Ovary (tissue), 10 donors: ENCODE measurements at regions of chr1 and their contacts with region 1.

Region 1: GRCh38 chr1:32612189-32612881 is 38.0 kb downstream of the ZBTB8OS start:
- DNase-seq: peak; percentile 45 to 79 (median 65)
- H3K4me3 ChIP-seq: peak overlapping the region; percentile 27
- H3K27ac ChIP-seq: no peak overlapping the region
- H3K4me1 ChIP-seq: peaks cover 5% of the 10 kb centered on the region
- H3K27me3 ChIP-seq: no peaks in the 10 kb centered on the region
- CTCF ChIP-seq: peak in 1 of 3 donors; percentile 36
- EP300 ChIP-seq: no peak
- POLR2A ChIP-seq: no peak

Region 2: DNA sequence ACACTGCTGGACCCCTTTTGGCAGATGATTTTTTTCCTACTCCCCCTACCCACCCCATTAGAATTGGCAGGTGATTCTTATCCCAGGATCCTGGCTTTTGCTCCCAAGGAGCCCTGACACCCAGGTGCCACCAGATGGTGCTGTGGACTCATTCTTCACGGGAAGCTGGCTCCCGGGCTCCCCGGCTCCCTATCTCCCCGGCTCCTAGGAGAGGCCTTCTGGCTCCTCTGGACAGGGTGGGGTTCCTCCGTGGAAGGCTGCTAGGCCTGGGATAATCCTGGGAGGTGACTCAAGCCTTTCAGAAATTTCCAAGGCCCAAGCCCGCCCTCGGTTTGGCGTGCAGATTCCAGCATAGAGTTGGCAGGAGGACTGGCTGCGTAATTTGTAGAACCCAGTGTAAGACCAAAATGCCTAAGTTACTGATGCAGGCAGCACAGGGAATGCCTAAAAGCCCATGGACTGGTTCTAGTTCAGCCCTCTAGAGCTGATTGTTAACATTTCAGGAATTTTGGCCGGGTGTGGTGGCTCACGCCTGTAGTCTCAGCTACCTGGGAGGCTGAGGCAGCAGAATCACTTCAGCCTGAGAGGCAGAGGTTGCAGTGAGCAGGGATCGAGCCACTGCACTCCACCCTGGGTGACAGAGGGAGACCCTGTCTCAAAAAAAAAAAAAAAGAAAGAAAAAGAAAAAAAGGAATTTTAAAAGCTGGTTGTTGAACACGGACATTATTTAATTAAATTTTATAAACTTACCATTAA is 211.3 kb before region 1 on chr1:
- intact Hi-C with region 1: loop called in 1 of 4 experiments (anchors 10 kb)
- DNase-seq: peak; percentile 88 to 92 (median 89)
- H3K4me3 ChIP-seq: no peak overlapping the region
- H3K27ac ChIP-seq: peak overlapping the region in 1 of 2 donors; percentile 51
- H3K4me1 ChIP-seq: no peaks in the 10 kb centered on the region
- H3K27me3 ChIP-seq: no peaks in the 10 kb centered on the region
- CTCF ChIP-seq: peak; percentile 86 to 87 (median 86)
- EP300 ChIP-seq: no peak
- POLR2A ChIP-seq: no peak

Region 3: DNA sequence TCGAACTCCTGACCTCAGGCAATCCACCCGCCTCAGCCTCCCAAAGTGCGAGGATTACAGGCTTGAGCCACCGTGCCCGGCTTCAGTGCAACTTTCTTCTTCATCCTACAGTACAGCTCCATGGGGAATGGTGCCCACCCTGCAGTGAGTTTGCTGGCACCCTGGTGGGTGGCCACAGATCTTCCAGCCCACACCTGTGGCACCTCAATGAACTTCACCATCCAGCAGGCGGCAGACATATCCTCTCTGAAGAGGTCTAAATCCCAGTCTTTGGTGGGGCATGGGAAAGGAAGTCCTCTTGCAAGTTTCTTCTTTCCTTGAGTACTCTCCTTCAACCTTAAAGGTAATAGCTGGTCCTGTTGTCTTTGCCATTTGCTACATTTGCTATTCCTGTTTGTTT is 91.2 kb before region 1 on chr1:
- intact Hi-C with region 1: loop called in 1 of 4 experiments (anchors 10 kb)
- DNase-seq: no peak
- H3K4me3 ChIP-seq: no peak overlapping the region
- H3K27ac ChIP-seq: no peak overlapping the region
- H3K4me1 ChIP-seq: no peaks in the 10 kb centered on the region
- H3K27me3 ChIP-seq: no peaks in the 10 kb centered on the region
- CTCF ChIP-seq: no peak
- EP300 ChIP-seq: no peak
- POLR2A ChIP-seq: no peak